ENCODE measurements at regions of chr2 and their contacts with region 1.

Region 1: DNA sequence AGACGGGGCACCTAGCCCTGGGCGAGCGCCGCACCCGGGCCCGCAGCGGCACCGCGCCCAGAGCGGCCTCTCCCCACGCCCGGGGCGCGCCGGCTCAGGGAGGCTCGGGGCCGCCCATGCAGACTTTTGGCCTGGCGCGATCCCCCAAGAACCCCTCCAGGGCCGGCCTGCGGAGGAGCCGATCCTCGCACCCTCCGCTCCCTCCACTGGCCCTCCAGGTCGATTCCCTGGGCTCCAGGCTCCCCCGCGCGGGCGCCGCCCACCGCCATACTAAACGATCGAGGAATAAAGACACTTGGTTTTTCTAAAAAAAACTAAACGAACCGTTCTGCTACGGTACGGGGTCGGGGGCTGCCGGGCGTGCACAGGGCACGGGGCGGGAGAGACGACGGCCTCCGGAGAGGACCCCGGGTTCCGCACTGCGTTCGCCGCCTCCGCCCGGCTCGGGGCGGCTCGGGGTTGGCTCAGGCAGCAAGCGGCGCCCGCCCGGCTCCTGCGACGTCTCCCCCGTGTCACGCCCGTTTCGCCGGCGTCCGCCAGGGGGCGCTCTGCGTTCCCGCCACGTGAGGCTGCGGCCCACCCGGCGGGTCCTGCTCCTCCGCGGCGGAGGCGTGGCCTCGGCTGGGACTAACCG is 365 bp upstream of the KHK start:
- DNase-seq: peak; percentile 74
- H3K4me3 ChIP-seq: peak overlapping the region; percentile 49
- H3K27ac ChIP-seq: no peak overlapping the region
- H3K27me3 ChIP-seq: no peaks in the 10 kb centered on the region
- CTCF ChIP-seq: peak; percentile 64

Region 2: DNA sequence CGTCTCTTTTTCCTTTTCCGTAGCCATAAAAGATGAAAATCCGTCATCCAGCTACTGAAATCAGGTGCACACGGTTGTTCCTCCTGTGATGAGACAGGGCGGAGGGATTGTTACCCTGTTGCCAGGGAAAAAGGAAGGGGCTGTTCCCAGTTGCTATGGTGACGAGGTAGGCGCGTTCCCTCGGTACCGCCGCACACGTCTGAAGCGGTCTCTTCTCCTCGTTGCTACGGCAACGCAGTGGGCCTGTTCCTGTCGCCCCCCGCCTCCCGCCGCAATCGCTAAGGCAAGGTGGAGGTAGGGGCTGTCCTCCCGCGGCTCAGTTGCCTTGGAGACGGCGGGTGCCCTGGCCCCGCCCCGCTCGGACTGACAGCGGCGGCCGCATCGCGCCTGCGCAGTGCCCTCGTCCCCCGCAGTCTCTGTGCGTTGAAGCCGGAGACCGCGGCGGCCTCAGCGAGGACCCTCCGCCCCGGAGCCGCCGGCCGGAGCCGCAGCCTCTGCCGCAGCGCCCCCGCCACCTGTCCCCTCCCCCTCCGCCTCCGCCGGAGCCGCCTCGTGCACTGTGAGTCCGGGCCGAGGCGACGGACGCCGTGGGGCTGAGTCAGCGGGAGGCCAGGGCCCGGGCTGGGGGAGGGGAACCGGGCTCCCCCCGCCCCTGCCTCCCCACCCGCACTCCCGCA is 115.8 kb before region 1 on chr2 and contains the start of gene MAPRE3:
- CTCF ChIA-PET with region 1: no interaction called
- POLR2A ChIA-PET with region 1: no interaction called
- DNase-seq: no peak
- H3K4me3 ChIP-seq: peak within 1 kb of the TSS; percentile 86
- H3K27ac ChIP-seq: peak within 1 kb of the TSS; percentile 31
- H3K27me3 ChIP-seq: no peaks in the 10 kb centered on the region
- CTCF ChIP-seq: no peak
- polyA plus RNA-seq, gene MAPRE3: 16.4 and 16.8 TPM in 2 replicates

Region 3: DNA sequence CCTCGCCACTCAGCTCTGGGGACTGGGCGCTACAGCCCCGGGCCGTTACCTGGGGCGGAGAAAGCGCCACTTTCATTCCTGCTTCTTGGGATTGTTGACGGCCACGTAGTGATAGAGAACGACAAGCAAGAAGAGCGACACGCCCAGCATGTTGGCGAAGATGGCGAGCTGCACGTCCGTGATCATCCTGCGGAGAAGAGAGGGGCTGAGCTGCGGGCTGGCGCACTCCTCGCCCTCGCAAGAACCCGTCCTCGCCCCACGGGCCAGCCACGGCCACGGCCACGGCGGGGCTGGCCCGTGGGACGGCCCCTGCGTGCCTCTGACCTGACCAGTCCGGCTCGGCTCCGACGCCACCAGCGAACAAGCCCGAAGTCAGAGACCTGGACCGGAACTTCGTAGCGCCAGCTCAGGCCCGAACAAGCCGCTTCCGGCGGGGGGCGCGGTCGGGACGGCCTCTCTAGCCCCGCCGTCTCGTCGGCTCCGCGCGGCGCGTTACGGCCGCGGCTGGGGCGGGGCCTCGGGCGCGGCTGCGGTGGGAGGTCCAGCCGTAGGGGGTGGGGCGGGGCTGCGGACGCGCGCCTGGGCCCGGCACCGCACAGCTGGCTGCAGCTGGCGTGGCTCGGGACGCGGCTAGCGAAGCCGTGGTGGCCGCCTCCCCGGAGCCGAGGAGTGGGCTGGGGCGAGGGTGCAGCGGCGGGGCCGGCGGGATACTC is 14.8 kb before region 1 on chr2 and contains the start of gene OST4:
- CTCF ChIA-PET with region 1: interaction called, 6 read pairs
- POLR2A ChIA-PET with region 1: interaction called, 25 read pairs
- DNase-seq: peak; percentile 84
- H3K4me3 ChIP-seq: peak within 1 kb of the TSS; percentile 96
- H3K27ac ChIP-seq: peak within 1 kb of the TSS; percentile 99
- H3K27me3 ChIP-seq: no peaks in the 10 kb centered on the region
- CTCF ChIP-seq: no peak; the same call in 1 of the 2 replicates
- polyA plus RNA-seq, gene OST4: 679 and 783 TPM in 2 replicates

Region 4: DNA sequence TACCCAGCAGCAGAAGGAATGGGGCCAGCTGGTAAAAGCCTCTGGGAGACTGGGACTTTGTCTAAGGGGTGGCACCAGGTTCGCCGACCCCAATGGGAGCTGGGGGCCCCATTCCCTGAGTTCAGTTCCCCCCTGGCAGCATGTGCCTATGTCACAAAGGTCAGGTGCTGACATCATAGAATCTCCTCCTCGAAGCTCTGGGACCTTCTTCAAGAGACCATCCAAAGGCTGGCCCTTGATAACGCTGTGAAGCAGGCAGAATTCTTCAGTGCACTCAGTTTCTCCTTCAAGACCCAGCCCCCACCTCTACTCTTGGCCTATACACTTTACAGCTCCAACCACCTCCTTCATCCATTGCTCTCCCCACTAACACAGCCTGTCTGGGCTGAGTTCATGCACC is 53.1 kb after region 1 on chr2 and contains the start of gene PRR30:
- CTCF ChIA-PET with region 1: no interaction called
- POLR2A ChIA-PET with region 1: no interaction called
- DNase-seq: no peak
- H3K4me3 ChIP-seq: no peak within 1 kb of the TSS
- H3K27ac ChIP-seq: no peak within 1 kb of the TSS
- H3K27me3 ChIP-seq: peaks cover 30% of the 10 kb centered on the region
- CTCF ChIP-seq: no peak
- polyA plus RNA-seq, gene PRR30: not detected in 2 replicates

Region 5: GRCh38 chr2:27199246-27199645 is 113.0 kb after region 1 on chr2:
- CTCF ChIA-PET with region 1: interaction called, 10 read pairs
- POLR2A ChIA-PET with region 1: no interaction called
- DNase-seq: no peak
- H3K4me3 ChIP-seq: no peak overlapping the region
- H3K27ac ChIP-seq: peak overlapping the region; percentile 11
- H3K27me3 ChIP-seq: peaks cover 3% of the 10 kb centered on the region
- CTCF ChIP-seq: no peak

Region 6: DNA sequence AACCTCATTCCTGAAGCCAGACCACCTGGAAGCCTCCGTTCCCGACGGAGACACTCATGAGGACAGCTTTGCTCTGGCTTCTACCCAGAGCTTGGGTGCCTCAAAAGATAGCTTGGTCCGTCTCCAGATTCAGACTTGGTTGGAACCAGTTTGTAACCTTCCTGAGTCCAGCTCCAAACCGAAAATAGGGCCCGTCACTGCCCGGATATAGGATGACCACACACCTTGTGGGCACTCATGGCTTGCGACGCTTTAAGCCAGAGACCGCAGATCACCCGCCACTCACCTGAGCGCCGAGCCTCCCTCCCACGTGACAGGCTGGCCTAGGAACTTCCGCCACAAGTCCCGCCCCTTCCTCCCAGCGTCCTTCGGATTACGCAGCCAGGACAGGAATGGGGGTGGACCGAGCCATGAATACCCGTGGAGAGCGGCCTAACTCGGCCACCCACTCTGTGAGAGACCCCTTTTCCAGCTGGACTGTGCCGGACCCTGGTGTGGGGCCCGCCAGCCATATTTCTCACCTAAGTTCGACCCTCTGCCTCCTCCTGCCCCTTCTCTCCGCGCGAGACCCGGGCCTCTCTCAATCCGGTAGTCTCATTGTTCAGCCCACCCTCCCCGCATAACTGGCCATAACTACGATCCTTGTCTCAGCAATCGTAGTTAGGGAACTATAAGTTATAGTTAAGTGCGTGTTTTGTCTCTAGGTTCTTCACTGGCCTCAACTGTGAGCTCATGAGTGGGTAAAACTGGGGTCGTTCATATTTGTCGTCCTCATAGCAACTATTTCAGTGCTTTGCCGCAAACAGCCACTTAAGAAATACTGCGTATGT is 236.8 kb after region 1 on chr2 and contains the start of gene MPV17:
- CTCF ChIA-PET with region 1: no interaction called
- POLR2A ChIA-PET with region 1: interaction called, 11 read pairs
- DNase-seq: peak; percentile 78
- H3K4me3 ChIP-seq: peak within 1 kb of the TSS; percentile 90
- H3K27ac ChIP-seq: peak within 1 kb of the TSS; percentile 95
- H3K27me3 ChIP-seq: no peaks in the 10 kb centered on the region
- CTCF ChIP-seq: no peak
- polyA plus RNA-seq, gene MPV17: 183 and 191 TPM in 2 replicates

Measured in AG04450 (cell line).